PC-9 (cell line): ENCODE measurements at regions of chr13 and their contacts with region 1.

Region 1: GRCh38 chr13:32323912-32324311 is 8.6 kb downstream of the BRCA2 start:
- DNase-seq: no peak
- H3K4me3 ChIP-seq: no peak overlapping the region
- H3K27ac ChIP-seq: no peak overlapping the region
- H3K4me1 ChIP-seq: no peaks in the 10 kb centered on the region
- H3K27me3 ChIP-seq: no peaks in the 10 kb centered on the region
- CTCF ChIP-seq: no peak

Region 2: DNA sequence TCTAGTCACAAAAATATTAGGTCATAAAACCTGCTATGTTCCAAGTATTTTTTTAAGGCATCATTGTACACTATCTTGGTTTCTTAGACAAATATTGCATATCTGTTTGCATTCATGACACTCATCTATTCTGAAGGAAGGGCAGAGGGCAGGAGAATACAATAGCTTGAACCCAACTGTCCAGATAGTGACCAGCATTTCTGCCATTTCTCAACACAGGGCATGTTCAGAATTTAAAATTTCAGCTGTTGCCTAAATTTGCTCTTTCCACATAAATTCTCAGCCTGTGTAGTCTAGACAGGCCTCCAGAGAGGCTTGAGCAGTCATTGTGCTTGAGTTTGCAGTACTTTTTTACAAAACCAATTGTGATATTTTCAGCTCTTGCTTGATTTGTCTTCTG is 128.2 kb before region 1 on chr13:
- CTCF ChIA-PET with region 1: interaction called, 20 read pairs
- POLR2A ChIA-PET with region 1: no interaction called
- intact Hi-C with region 1: no loop called
- DNase-seq: no peak
- H3K4me3 ChIP-seq: no peak overlapping the region
- H3K27ac ChIP-seq: no peak overlapping the region
- H3K4me1 ChIP-seq: no peaks in the 10 kb centered on the region
- H3K27me3 ChIP-seq: no peaks in the 10 kb centered on the region
- CTCF ChIP-seq: no peak